ENCODE measurements at regions of chr19 and their contacts with region 1.

Region 1: DNA sequence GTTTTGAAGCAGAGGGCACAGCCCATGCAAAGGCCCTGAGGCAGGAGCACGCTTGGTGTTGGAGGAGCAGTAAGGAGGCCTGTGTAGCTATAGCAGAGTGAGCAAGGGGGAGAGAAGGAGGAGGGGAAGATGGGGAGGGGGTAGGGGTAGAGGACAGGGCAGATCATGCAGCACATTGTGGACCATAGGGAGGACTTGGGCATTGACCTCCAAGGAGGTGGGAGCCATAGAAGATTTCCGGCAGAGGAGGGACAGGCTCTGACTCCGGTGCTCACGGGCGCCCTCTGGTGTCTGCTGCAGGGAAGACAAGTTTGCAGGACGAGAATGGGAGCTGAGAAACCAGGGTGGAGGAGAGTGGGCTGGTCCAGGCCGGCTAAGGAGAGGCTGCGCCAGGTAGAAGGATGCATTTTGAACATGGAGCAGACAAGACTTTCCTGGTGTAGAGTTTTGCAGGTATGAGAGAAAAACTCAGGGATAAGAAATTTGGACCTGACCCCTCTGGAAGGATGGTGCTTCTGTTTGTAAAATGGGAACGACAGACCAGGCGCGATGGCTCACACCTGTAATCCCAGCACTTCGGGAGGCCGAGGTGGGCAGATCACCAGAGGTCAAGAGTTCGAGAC is 13.7 kb upstream of the CREB3L3 start:
- DNase-seq: peak; percentile 92
- H3K4me3 Mint-ChIP-seq: no peak overlapping the region
- H3K27ac Mint-ChIP-seq: no peak overlapping the region
- H3K4me1 Mint-ChIP-seq: peaks cover 16% of the 10 kb centered on the region
- H3K27me3 Mint-ChIP-seq: peaks cover 38% of the 10 kb centered on the region

Region 2: GRCh38 chr19:3984908-3985642 is 154.7 kb before region 1 on chr19 and contains the start of gene EEF2:
- CTCF ChIA-PET with region 1: interaction called, 18 read pairs
- DNase-seq: peak; percentile 92
- H3K4me3 Mint-ChIP-seq: peak within 1 kb of the TSS; percentile 97
- H3K27ac Mint-ChIP-seq: peak within 1 kb of the TSS; percentile 90
- H3K4me1 Mint-ChIP-seq: peaks cover 59% of the 10 kb centered on the region
- H3K27me3 Mint-ChIP-seq: no peaks in the 10 kb centered on the region